Tibial artery (tissue), 4 donors: ENCODE measurements at regions of chr11 and their contacts with region 1.

Region 1: GRCh38 chr11:63608351-63609038 is 5.7 kb downstream of the PLAAT3 start:
- DNase-seq: peak in 1 of 2 donors; percentile 52
- H3K4me3 ChIP-seq: no peak overlapping the region
- H3K27ac ChIP-seq: peak overlapping the region; percentile 36 to 50
- H3K4me1 ChIP-seq: peaks cover 0 to 56% (median 37%) of the 10 kb centered on the region in 4 donors
- H3K27me3 ChIP-seq: no peaks in the 10 kb centered on the region
- CTCF ChIP-seq: no peak

Region 2: GRCh38 chr11:63536669-63537292 is 71.7 kb before region 1 on chr11 and contains the start of gene PLAAT4:
- intact Hi-C with region 1: loop called (anchors 5 kb)
- DNase-seq: peak; percentile 33 to 73
- H3K4me3 ChIP-seq: peak within 1 kb of the TSS; percentile 48 to 50
- H3K27ac ChIP-seq: peak within 1 kb of the TSS; percentile 85 to 91
- H3K4me1 ChIP-seq: peaks cover 0 to 44% (median 31%) of the 10 kb centered on the region in 4 donors
- H3K27me3 ChIP-seq: no peaks in the 10 kb centered on the region
- CTCF ChIP-seq: no peak